KBM-7 (cell line): ENCODE measurements at regions of chr15 and their contacts with region 1.

Region 1: GRCh38 chr15:37289109-37289765 is 188.9 kb upstream of the MEIS2 start:
- DNase-seq: peak; percentile 5

Region 2: DNA sequence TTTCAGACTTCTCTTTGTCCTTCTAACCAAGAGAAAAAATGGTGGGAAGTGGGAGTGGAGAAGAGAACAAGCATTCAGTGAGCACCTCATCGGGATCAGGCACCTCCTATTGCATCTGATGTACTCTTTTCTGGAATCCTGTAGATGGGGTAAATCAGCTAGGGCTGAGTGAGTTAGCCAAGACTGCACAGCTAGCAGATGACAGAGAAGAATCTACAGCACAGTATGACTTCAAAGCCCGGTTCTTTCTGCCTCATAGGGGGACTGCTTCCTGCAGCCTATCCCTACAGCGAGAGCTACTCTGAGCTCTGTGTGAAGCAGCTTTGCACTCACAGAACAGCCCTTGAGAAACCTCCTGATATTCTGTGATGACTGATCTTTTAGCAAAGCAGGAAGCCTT is 86.3 kb after region 1 on chr15:
- in situ Hi-C with region 1: loop called (anchors 25 kb)
- DNase-seq: no peak